OCI-LY7 (cell line): ENCODE measurements at regions of chr12 and their contacts with region 1.

Region 1: DNA sequence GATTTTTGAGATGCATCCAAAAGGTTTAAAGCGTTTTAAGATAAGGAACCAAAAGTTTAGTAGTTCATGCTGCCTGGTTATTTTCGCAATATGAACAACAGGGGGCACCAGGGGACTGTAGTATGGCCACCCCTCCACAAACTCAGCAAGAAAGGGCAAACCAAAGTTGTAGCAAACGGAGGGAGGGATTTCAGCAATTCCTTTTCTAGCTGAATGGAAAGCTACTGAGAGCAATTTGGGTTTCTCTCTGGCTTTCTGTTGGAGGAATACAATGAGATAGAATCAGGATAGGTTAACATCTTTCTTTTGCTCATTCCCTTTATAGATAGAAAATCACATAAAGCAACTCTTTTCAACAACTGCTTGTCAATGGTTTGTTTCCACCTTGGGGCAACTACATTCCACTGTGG is 62.5 kb downstream of the DRAM1 start:
- DNase-seq: peak; percentile 83
- H3K4me3 ChIP-seq: no peak overlapping the region
- H3K27ac ChIP-seq: no peak overlapping the region
- H3K4me1 ChIP-seq: peaks cover 48% of the 10 kb centered on the region
- CTCF ChIP-seq: peak; percentile 99

Region 2: GRCh38 chr12:101743724-101744472 is 196.0 kb before region 1 on chr12:
- CTCF ChIA-PET with region 1: no interaction called
- POLR2A ChIA-PET with region 1: interaction called, 3 read pairs
- intact Hi-C with region 1: loop called (anchors 10 kb)
- DNase-seq: peak; percentile 93
- H3K4me3 ChIP-seq: peak overlapping the region; percentile 47
- H3K27ac ChIP-seq: peak overlapping the region; percentile 95
- H3K4me1 ChIP-seq: peaks cover 66% of the 10 kb centered on the region
- CTCF ChIP-seq: peak; percentile 79

Region 3: DNA sequence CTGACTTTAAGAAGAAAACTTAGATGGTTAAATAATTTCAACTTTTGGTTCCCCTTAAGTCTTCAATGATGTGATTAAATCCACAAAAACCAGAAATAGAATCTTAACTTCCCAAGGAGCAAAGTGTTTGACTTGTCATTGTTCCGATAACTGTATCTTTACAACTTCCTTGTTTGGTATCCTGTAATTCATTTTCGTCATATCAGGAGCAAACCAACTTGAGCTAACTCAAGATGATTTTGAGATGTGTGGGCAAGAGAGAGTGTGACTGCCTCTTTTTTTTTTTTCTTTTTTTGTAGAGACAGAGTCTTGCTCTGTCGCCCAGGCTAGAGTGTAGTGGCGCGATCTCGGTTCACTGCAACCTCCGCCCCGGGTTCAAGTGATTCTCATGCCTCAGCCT is 37.2 kb before region 1 on chr12:
- CTCF ChIA-PET with region 1: no interaction called
- POLR2A ChIA-PET with region 1: no interaction called
- intact Hi-C with region 1: no loop called
- DNase-seq: no peak
- H3K4me3 ChIP-seq: no peak overlapping the region
- H3K27ac ChIP-seq: no peak overlapping the region
- H3K4me1 ChIP-seq: no peaks in the 10 kb centered on the region
- CTCF ChIP-seq: no peak

Region 4: GRCh38 chr12:101957252-101957978 is 17.6 kb after region 1 on chr12:
- CTCF ChIA-PET with region 1: no interaction called
- POLR2A ChIA-PET with region 1: interaction called, 21 read pairs
- intact Hi-C with region 1: no loop called
- DNase-seq: no peak
- H3K4me3 ChIP-seq: no peak overlapping the region
- H3K27ac ChIP-seq: no peak overlapping the region
- H3K4me1 ChIP-seq: no peaks in the 10 kb centered on the region
- CTCF ChIP-seq: no peak

Region 5: GRCh38 chr12:102061560-102062418 is 121.9 kb after region 1 on chr12 and contains the start of gene WASHC3:
- CTCF ChIA-PET with region 1: no interaction called
- POLR2A ChIA-PET with region 1: interaction called, 7 read pairs
- intact Hi-C with region 1: loop called (anchors 5 kb)
- DNase-seq: peak; percentile 94
- H3K4me3 ChIP-seq: peak within 1 kb of the TSS; percentile 90
- H3K27ac ChIP-seq: peak within 1 kb of the TSS; percentile 34
- H3K4me1 ChIP-seq: peaks cover 6% of the 10 kb centered on the region
- CTCF ChIP-seq: no peak
- total RNA-seq, gene WASHC3: 28.4 and 29.2 TPM in 2 replicates

Region 6: DNA sequence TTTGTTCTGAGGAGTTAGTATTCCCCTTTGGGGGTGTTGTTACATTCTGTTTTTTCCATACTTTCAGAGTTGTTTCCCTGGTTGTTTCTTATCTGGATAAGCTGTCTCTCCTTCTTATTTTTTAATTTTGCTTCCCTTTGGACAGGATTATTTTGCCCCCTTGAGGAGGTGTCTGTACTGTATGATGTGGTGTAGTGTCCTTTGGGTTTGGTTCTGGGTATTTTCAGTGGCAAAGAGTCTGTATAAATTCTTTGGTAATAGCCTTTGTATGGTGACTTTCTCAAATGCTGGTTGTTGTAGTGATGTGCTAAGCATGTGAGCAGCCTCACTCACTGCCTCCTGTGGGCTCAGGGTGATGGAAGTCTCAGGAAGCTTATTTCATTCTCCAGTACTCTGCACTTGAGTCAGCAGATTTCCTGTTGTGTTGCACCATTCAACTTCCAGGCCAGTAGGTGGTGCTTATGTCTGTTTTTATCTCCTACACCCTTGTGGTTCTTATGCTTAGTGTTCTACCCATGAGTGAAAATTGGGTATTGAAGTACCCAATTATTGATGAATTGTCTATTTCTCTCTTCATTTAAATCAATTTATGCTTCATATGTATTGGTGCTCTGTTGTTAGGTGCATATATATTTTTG is 361.1 kb after region 1 on chr12:
- CTCF ChIA-PET with region 1: no interaction called
- POLR2A ChIA-PET with region 1: no interaction called
- intact Hi-C with region 1: loop called (anchors 10 kb)
- DNase-seq: peak; percentile 35
- H3K4me3 ChIP-seq: no peak overlapping the region
- H3K27ac ChIP-seq: no peak overlapping the region
- H3K4me1 ChIP-seq: no peaks in the 10 kb centered on the region
- CTCF ChIP-seq: peak; percentile 73

Region 7: GRCh38 chr12:102702447-102703114 is 762.7 kb after region 1 on chr12:
- CTCF ChIA-PET with region 1: interaction called, 5 read pairs
- POLR2A ChIA-PET with region 1: interaction called, 3 read pairs
- intact Hi-C with region 1: loop called (anchors 1 kb)
- DNase-seq: peak; percentile 50
- H3K4me3 ChIP-seq: no peak overlapping the region
- H3K27ac ChIP-seq: no peak overlapping the region
- H3K4me1 ChIP-seq: no peaks in the 10 kb centered on the region
- CTCF ChIP-seq: peak; percentile 88